CD14-positive monocyte (primary cell): ENCODE measurements at regions of chr17 and their contacts with region 1.

Region 1: GRCh38 chr17:64025732-64026294 is 5.4 kb upstream of the ICAM2 start:
- DNase-seq: peak; percentile 86 to 89 (median 89)
- H3K4me3 ChIP-seq: peak overlapping the region in 2 of 3 experiments; percentile 1 to 52
- H3K4me3 Mint-ChIP-seq: peak overlapping the region; percentile 77 to 90
- H3K27ac ChIP-seq: peak overlapping the region in 1 of 2 donors; percentile 50
- H3K27ac Mint-ChIP-seq: peak overlapping the region in 5 of 7 donors; percentile 43 to 84 (median 78)
- H3K4me1 ChIP-seq: peaks cover 17 to 20% of the 10 kb centered on the region in 2 donors
- H3K4me1 Mint-ChIP-seq: peaks cover 31% of the 10 kb centered on the region
- H3K27me3 ChIP-seq: no peaks in the 10 kb centered on the region
- H3K27me3 Mint-ChIP-seq: peaks cover 0 to 6% (median 3%) of the 10 kb centered on the region in 3 donors
- CTCF ChIP-seq: peak; percentile 99

Region 2: GRCh38 chr17:63919311-63919723 is 106.5 kb before region 1 on chr17:
- intact Hi-C with region 1: loop called (anchors 5 to 10 kb)
- DNase-seq: peak; percentile 65 to 76 (median 71)
- H3K4me3 ChIP-seq: no peak overlapping the region
- H3K4me3 Mint-ChIP-seq: no peak overlapping the region
- H3K27ac ChIP-seq: no peak overlapping the region
- H3K27ac Mint-ChIP-seq: peak overlapping the region in 2 of 7 donors; percentile 47 to 55
- H3K4me1 ChIP-seq: peaks cover 0 to 5% of the 10 kb centered on the region in 2 donors
- H3K4me1 Mint-ChIP-seq: peaks cover 24% of the 10 kb centered on the region
- H3K27me3 ChIP-seq: no peaks in the 10 kb centered on the region
- H3K27me3 Mint-ChIP-seq: peaks cover 3 to 9% (median 4%) of the 10 kb centered on the region in 3 donors
- CTCF ChIP-seq: peak; percentile 90

Region 3: DNA sequence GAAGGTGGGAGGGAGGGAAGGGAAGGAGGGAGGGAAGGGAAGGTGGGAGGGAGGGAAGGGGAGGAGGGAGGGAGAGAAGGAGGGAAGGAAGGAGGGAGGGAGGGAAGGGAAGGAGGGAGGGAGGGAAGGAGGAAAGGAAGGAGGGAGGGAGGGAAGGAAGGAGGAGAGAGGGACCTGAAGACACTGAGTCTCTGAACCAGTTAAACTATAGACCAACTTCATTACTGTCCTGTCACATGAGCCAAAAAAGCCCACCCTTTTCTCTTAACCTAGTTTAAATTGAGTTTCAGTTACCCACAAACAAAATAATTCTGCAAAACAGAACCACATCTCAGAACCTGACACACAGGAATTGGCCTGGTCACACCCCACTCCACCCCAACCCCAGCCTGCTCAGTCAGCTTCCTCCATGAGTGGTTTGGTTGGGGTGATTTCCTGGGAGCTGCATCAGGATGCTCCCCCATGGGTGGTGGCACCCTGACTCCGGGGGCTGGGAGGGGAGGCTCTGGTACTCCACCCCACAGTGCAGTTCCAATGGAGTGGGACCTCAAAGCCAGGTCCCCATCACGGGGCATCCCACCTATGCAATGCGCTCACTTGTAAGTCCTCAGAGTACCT is 32.3 kb before region 1 on chr17:
- intact Hi-C with region 1: loop called (anchors 5 kb)
- DNase-seq: no peak
- H3K4me3 ChIP-seq: no peak overlapping the region
- H3K4me3 Mint-ChIP-seq: no peak overlapping the region
- H3K27ac ChIP-seq: no peak overlapping the region
- H3K27ac Mint-ChIP-seq: no peak overlapping the region
- H3K4me1 ChIP-seq: peaks cover 22 to 24% of the 10 kb centered on the region in 2 donors
- H3K4me1 Mint-ChIP-seq: peaks cover 23% of the 10 kb centered on the region
- H3K27me3 ChIP-seq: peaks cover 8 to 21% of the 10 kb centered on the region in 2 donors
- H3K27me3 Mint-ChIP-seq: peaks cover 25 to 43% (median 36%) of the 10 kb centered on the region in 3 donors
- CTCF ChIP-seq: no peak

Region 4: DNA sequence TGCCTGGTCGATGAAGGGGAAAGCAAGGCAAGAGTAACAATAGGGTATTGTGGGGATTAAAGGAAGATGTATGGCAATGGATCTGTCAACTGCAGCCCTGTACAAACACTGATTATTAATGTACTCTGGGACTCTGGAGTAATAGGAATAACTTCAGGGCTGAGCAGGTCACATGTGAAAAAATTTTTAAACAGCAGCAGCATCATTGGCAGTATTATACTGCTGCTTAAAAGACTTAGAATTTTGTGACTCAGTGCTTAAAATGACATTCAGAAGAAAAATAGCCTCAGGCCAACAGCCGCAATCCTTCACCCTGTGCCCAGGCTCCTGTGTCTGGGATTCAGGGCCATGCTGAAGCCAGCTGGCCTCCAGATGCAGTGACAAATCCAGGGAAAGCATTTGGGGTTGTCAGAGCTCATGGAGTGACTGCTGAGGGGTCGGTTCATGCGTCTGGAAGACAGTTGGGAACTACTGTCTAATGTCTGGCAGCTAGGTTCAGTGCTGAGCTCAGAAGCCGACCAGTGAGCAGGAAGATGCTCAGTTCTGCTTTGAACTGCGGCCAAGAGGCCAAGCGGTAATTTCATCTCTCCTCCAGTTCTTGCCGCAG is 215.0 kb after region 1 on chr17:
- intact Hi-C with region 1: no loop called
- DNase-seq: peak in 1 of 3 donors; percentile 18
- H3K4me3 ChIP-seq: no peak overlapping the region
- H3K4me3 Mint-ChIP-seq: peak overlapping the region in 1 of 2 donors; percentile 4
- H3K27ac ChIP-seq: peak overlapping the region in 1 of 2 donors; percentile 37
- H3K27ac Mint-ChIP-seq: peak overlapping the region in 4 of 7 donors; percentile 8 to 76 (median 51)
- H3K4me1 ChIP-seq: peaks cover 3 to 12% of the 10 kb centered on the region in 2 donors
- H3K4me1 Mint-ChIP-seq: peaks cover 20% of the 10 kb centered on the region
- H3K27me3 ChIP-seq: no peaks in the 10 kb centered on the region
- H3K27me3 Mint-ChIP-seq: no peaks in the 10 kb centered on the region
- CTCF ChIP-seq: no peak